ENCODE measurements at regions of chr18 and their contacts with region 1.

Region 1: DNA sequence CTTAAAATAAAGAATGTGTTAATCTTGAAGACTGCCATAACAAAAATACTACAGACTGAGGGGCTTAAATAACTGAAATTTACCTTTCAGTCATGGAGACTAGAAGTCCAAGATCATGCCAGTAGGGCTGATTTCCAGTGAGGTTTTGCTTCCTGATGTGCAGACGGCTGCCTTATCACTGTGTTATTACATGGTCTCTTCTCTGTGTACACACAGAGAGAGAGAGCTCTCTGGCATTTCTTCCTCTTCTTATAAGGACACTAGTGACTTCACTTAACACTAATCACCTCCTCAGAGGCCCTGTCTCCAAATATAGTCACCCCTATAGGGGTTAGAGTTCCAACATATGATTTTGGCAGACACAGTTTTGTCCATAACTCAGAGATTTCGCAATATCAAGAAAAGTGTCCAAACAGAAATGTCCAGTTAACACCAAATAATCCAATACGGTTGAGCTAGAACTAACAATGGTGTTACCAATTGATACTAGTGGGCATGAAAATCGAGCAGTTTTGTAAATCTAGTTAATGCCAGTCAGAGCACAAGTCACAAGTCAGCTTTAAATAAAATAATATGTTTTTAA is 399.8 kb downstream of the ADCYAP1 start:
- DNase-seq: no peak
- ATAC-seq: no peak
- H3K4me3 ChIP-seq: no peak overlapping the region
- H3K27ac ChIP-seq: no peak overlapping the region
- H3K4me1 ChIP-seq: no peaks in the 10 kb centered on the region
- H3K27me3 ChIP-seq: no peaks in the 10 kb centered on the region
- CTCF ChIP-seq: no peak
- EP300 ChIP-seq: no peak
- POLR2A ChIP-seq: no peak
- RAD21 ChIP-seq: no peak

Region 2: GRCh38 chr18:765764-766549 is 538.5 kb before region 1 on chr18:
- CTCF ChIA-PET with region 1: no interaction called
- POLR2A ChIA-PET with region 1: no interaction called
- in situ Hi-C with region 1: no loop called
- intact Hi-C with region 1: no loop called
- DNase-seq: no peak
- ATAC-seq: no peak
- H3K4me3 ChIP-seq: no peak overlapping the region
- H3K27ac ChIP-seq: no peak overlapping the region
- H3K4me1 ChIP-seq: peaks cover 34% of the 10 kb centered on the region
- H3K27me3 ChIP-seq: no peaks in the 10 kb centered on the region
- CTCF ChIP-seq: no peak
- EP300 ChIP-seq: no peak
- POLR2A ChIP-seq: no peak
- RAD21 ChIP-seq: no peak

Region 3: GRCh38 chr18:1244397-1245122 is 59.9 kb before region 1 on chr18:
- CTCF ChIA-PET with region 1: no interaction called
- POLR2A ChIA-PET with region 1: no interaction called
- in situ Hi-C with region 1: no loop called
- intact Hi-C with region 1: loop called (anchors 10 kb)
- DNase-seq: no peak
- ATAC-seq: no peak
- H3K4me3 ChIP-seq: no peak overlapping the region
- H3K27ac ChIP-seq: no peak overlapping the region
- H3K4me1 ChIP-seq: no peaks in the 10 kb centered on the region
- H3K27me3 ChIP-seq: no peaks in the 10 kb centered on the region
- CTCF ChIP-seq: no peak
- EP300 ChIP-seq: no peak
- POLR2A ChIP-seq: no peak
- RAD21 ChIP-seq: no peak